ENCODE measurements at regions of chr10 and their contacts with region 1.

Region 1: GRCh38 chr10:26334932-26335573 is 103.1 kb upstream of the APBB1IP start:
- DNase-seq: peak in 1 of 2 donors; percentile 34
- H3K4me3 ChIP-seq: peak overlapping the region in 1 of 2 donors; percentile 16
- H3K27ac ChIP-seq: no peak overlapping the region
- H3K4me1 ChIP-seq: no peaks in the 10 kb centered on the region
- H3K27me3 ChIP-seq: no peaks in the 10 kb centered on the region
- CTCF ChIP-seq: peak; percentile 68 to 79

Region 2: GRCh38 chr10:26080939-26081338 is 254.1 kb before region 1 on chr10:
- intact Hi-C with region 1: loop called (anchors 5 kb)
- DNase-seq: no peak
- H3K4me3 ChIP-seq: no peak overlapping the region
- H3K27ac ChIP-seq: no peak overlapping the region
- H3K4me1 ChIP-seq: no peaks in the 10 kb centered on the region
- H3K27me3 ChIP-seq: no peaks in the 10 kb centered on the region
- CTCF ChIP-seq: no peak

Region 3: GRCh38 chr10:26269754-26270153 is 65.3 kb before region 1 on chr10:
- intact Hi-C with region 1: no loop called
- DNase-seq: no peak
- H3K4me3 ChIP-seq: no peak overlapping the region
- H3K27ac ChIP-seq: no peak overlapping the region
- H3K4me1 ChIP-seq: peaks cover 0 to 12% (median 5%) of the 10 kb centered on the region in 4 donors
- H3K27me3 ChIP-seq: peaks cover 0 to 7% of the 10 kb centered on the region in 2 donors
- CTCF ChIP-seq: peak in 1 of 2 experiments; percentile 36

Region 4: DNA sequence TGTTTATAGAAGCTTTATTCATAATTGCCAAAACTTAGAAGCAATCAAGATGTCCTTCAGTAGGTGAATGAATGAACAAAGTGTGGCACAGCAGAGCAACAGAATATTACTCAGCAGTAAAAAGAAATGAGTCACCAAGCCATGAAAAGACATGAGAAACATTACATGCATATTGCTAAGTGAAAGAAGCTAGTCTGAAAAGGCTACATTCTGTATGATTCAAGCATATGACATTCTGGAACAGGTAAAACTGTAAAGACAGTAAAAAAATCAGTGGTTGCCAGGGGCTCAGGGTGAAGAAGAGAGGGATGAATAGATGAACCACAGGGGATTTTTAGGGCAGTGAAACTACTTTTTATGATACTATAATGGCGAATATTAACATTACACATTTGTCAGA is 22.1 kb after region 1 on chr10:
- intact Hi-C with region 1: no loop called
- DNase-seq: no peak
- H3K4me3 ChIP-seq: no peak overlapping the region
- H3K27ac ChIP-seq: no peak overlapping the region
- H3K4me1 ChIP-seq: no peaks in the 10 kb centered on the region
- H3K27me3 ChIP-seq: no peaks in the 10 kb centered on the region
- CTCF ChIP-seq: no peak

Region 5: DNA sequence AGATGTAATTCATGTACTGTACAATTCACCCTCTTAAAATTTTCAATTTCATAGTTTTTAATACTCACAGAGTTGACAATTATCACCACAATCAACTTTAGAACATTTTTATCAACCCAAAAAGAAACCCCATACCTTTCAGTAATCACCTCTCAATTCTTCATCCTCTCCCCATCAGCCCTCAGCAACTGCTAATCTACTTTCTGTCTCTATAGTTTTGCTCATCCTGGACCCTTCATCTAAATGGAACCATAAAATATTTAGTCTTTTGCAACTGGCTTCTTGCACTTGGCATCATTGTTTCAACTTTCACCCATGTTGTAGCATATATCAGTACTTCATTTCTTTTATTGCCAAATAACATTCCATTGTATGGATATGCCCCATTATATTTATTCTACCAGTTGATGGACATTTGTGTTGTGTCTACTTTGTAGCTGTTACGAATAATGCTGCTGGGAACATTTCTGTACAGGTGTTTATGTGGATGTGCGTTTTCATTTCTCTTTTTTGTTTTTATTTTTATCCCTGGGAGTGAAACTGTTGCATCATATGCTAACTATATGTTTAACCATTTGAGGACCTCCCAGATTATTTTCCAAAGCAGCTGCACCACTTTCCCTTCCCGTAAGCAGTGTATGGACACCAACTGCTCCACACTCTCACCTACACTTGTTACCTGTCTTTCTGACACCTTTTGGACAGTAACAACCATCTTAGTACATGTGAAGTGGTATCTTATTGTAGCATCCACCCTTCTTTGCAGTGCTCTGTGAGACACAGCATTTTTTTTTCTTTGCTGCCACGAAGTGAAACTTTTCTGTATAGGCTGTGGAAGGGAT is 37.7 kb after region 1 on chr10:
- intact Hi-C with region 1: no loop called
- DNase-seq: no peak
- H3K4me3 ChIP-seq: no peak overlapping the region
- H3K27ac ChIP-seq: no peak overlapping the region
- H3K4me1 ChIP-seq: no peaks in the 10 kb centered on the region
- H3K27me3 ChIP-seq: peaks cover 0 to 6% of the 10 kb centered on the region in 2 donors
- CTCF ChIP-seq: no peak

Region 6: DNA sequence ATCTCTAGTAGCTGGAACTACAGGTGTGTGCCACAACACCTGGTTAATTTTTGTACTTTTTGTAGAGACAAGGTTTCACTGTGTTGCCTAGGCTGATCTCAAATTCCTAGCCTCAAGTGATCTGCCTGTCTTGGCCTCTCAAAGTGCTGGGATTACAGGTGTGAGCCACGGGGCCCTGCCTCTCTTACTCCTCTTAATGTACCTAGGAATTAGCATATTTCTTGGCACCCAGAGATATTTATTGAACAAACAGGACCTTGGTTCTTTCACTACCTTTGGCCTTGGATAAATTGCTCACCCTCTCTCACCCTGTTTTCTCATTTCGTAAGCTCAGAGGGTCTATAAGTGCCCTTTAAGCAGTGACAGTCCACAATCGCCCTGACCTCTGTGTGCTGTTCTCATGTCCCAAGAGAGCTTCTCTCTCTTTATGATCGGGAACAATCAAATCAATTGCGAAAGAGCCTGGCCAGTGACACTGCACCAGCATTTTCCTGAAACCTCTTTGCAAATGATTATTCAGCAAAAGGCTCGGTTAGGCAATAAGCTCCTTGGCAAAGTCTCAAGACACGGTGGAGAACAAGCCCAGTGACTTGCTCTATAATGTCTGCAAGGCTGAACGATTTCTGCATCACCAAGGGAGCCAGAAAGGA is 220.8 kb after region 1 on chr10:
- intact Hi-C with region 1: loop called (anchors 2 kb)
- DNase-seq: peak; percentile 75 to 89
- H3K4me3 ChIP-seq: no peak overlapping the region
- H3K27ac ChIP-seq: no peak overlapping the region
- H3K4me1 ChIP-seq: peaks cover 0 to 7% (median 0%) of the 10 kb centered on the region in 4 donors
- H3K27me3 ChIP-seq: no peaks in the 10 kb centered on the region
- CTCF ChIP-seq: no peak